Activated CD8-positive, alpha-beta T cell treated with anti-CD3 and anti-CD28 coated beads, Interleukin-2, amount 10 ng/mL, durations not matched to agents 7 days and 5 days (primary cell): ENCODE measurements at regions of chr12 and their contacts with region 1.

Region 1: DNA sequence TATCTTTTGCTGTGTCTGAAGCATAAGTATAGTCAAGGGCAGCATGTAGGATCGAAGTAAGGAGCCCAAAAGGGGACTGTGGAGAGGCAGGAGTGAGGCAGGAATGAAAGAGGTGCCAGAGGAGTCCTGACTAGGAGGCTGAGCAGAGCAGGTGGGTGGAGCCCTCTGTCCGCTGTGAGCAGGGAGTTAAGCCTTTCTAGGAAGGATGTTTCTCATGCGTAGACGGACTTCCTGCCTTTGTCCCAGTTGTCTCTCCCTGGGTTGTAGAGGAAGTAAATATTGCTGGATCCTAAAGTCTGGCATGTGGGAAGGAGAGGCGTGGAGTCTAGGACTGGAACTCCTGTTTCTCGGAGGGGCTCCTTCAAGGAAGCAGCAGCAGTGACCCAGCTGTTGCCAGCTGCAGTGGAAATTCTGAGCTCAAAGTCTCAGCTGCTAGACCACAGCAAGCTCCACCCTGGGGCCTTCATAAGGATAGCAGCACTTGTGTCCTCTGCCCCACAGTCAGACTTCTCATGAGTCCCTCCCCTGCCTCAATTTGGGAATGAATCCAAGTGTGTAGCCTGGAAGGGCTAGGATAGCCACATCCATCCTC is 44.0 kb downstream of the RBMS2 start:
- DNase-seq: peak; percentile 57
- ATAC-seq: peak; percentile 81
- H3K4me3 Mint-ChIP-seq: peak overlapping the region; percentile 26
- H3K27ac Mint-ChIP-seq: peak overlapping the region; percentile 73
- H3K4me1 Mint-ChIP-seq: peaks cover 26% of the 10 kb centered on the region
- H3K27me3 Mint-ChIP-seq: no peaks in the 10 kb centered on the region

Region 2: GRCh38 chr12:56521590-56522371 is 43.8 kb before region 1 on chr12 and contains the start of gene RBMS2:
- CTCF ChIA-PET with region 1: interaction called, 75 read pairs
- POLR2A ChIA-PET with region 1: no interaction called
- DNase-seq: peak; percentile 67
- ATAC-seq: peak; percentile 94
- H3K4me3 Mint-ChIP-seq: peak within 1 kb of the TSS; percentile 75
- H3K27ac Mint-ChIP-seq: peak within 1 kb of the TSS; percentile 82
- H3K4me1 Mint-ChIP-seq: peaks cover 31% of the 10 kb centered on the region
- H3K27me3 Mint-ChIP-seq: no peaks in the 10 kb centered on the region
- total RNA-seq, gene RBMS2: 4.8 to 5.5 TPM

Region 3: DNA sequence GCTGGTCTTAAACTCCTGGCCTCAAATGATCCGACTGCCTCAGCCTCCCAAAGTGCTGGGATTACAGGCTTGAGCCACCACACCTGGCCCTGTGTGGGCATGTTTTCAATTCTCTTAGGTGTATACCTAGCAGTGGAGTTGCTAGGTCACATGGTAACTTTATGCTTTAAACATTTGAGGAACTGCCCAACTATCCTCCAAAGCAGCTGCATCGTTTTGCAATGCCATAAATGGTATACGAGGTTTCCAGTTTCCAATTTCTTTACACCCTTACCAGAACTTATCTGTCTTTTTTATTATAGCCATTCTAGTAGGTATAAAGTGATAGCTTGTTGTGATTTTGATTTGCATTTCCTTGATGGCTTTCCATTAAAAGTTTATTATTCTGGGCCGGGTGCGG is 18.9 kb before region 1 on chr12:
- CTCF ChIA-PET with region 1: no interaction called
- POLR2A ChIA-PET with region 1: no interaction called
- DNase-seq: no peak
- ATAC-seq: no peak
- H3K4me3 Mint-ChIP-seq: no peak overlapping the region
- H3K27ac Mint-ChIP-seq: no peak overlapping the region
- H3K4me1 Mint-ChIP-seq: no peaks in the 10 kb centered on the region
- H3K27me3 Mint-ChIP-seq: no peaks in the 10 kb centered on the region

Region 4: DNA sequence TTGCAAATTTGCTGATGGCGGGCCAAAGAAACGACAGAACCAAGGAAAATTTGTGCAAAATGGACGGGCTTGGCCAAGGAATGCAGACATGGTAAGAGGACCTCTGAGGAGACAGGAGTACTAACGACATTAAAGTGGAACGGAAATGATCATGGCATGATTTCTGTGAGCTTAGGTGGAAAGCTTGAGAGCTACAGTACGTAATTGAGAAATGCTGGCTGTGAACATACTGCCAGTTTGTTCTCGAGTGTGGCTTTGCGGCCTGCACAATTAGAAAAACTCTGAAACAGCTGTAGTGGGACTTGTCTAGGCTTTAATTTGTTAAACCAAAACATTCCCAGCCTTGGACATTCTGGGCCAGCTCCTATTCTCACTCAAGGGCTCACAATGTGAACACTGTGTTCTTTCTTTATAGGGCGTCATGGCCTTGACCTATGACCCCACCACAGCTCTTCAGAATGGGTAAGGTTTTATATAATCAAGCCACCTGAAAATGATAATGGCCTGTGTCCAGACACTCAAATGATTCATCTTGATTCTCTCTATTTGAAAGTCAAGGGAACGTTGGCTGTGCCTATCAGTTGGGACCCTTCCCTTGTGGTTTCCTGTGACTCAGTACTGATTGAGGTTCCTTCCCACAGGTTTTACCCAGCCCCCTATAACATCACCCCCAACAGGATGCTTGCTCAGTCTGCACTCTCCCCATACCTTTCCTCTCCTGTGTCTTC is 16.0 kb after region 1 on chr12:
- CTCF ChIA-PET with region 1: interaction called, 17 read pairs
- POLR2A ChIA-PET with region 1: interaction called, 3 read pairs
- DNase-seq: peak; percentile 72
- ATAC-seq: peak; percentile 91
- H3K4me3 Mint-ChIP-seq: peak overlapping the region; percentile 53
- H3K27ac Mint-ChIP-seq: peak overlapping the region; percentile 86
- H3K4me1 Mint-ChIP-seq: peaks cover 34% of the 10 kb centered on the region
- H3K27me3 Mint-ChIP-seq: no peaks in the 10 kb centered on the region

Region 5: DNA sequence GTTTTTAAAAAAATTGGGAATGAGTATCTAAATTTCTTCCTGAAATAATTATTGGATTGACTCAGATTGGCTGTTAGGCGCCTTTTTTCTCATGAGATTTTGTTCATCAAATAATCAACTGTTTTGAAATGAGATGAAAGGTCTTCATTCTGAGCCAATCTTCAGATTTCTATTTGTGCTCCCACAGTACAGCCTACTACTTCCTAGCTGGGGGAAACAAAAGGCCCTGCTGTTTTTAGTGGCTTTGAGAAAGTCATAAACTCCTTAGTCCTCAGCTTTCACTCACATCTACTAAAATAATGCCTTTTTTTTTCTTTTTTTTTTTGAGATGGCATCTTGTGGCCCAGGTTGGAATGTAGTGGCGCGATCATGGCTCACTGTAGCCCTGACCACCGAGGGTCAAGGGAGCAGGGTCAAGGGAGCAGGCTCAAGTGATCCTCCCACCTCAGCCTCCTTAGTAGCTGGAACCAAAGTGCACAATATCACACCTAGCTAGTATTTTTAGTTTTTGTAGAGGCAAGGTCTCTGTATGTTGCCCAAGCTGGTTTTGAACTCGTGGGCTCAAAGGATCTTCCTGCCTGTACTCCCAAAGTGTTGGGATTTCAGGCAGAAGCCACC is 144.3 kb after region 1 on chr12:
- CTCF ChIA-PET with region 1: no interaction called
- POLR2A ChIA-PET with region 1: no interaction called
- DNase-seq: no peak
- ATAC-seq: no peak
- H3K4me3 Mint-ChIP-seq: no peak overlapping the region
- H3K27ac Mint-ChIP-seq: no peak overlapping the region
- H3K4me1 Mint-ChIP-seq: peaks cover 1% of the 10 kb centered on the region
- H3K27me3 Mint-ChIP-seq: no peaks in the 10 kb centered on the region